PC-9 (cell line): ENCODE measurements at regions of chr6 and their contacts with region 1.

Region 1: GRCh38 chr6:27547157-27548075 is 74.5 kb upstream of the ZNF184 start:
- DNase-seq: peak; percentile 46 to 66
- H3K4me3 ChIP-seq: peak overlapping the region; percentile 64
- H3K27ac ChIP-seq: peak overlapping the region; percentile 37
- H3K4me1 ChIP-seq: no peaks in the 10 kb centered on the region; the same call in none of the 2 replicates
- H3K27me3 ChIP-seq: no peaks in the 10 kb centered on the region
- CTCF ChIP-seq: no peak

Region 2: GRCh38 chr6:27471365-27472115 is 75.9 kb before region 1 on chr6:
- CTCF ChIA-PET with region 1: no interaction called
- POLR2A ChIA-PET with region 1: no interaction called
- intact Hi-C with region 1: no loop called
- DNase-seq: no peak
- H3K4me3 ChIP-seq: peak overlapping the region; percentile 91
- H3K27ac ChIP-seq: peak overlapping the region; percentile 79; the same call in 1 of the 2 replicates
- H3K4me1 ChIP-seq: peaks cover 11% of the 10 kb centered on the region; the same call in 1 of the 2 replicates
- H3K27me3 ChIP-seq: no peaks in the 10 kb centered on the region
- CTCF ChIP-seq: no peak

Region 3: DNA sequence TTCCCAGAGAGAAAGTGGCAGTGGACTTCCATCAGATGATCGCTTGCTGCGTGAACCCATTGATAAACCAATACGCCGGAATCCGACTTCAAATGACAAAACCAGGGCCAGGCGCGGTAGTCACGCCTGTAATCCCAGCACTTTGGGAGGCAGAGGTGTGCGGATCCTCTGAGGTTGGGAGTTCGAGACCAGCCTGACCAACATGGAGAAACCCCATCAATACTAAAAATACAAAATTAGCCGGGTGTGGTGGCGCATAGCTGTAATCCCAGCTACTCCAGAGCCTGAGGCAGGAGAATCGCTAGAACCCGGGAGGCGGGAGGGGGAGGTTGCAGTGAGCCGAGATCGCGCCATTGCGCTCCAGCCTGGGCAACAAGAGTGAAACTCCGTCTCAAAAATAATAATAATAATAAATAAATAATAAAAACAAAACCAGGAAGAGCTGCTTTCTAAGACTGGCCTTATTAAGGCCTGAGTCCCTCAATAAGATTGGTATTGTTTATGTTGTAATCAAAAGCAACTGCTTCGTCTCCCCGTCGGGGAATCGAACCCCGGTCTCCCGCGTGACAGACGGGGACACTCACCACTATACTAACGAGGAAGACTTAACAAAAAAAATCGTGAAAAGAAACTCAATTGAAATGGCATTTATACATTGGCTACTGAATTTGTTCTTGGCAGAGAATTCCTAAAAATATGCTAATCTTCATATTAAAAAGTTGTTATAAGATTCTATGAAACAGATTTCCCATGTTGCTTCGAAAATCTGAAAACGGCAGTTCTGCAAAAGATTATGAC is 35.7 kb after region 1 on chr6:
- CTCF ChIA-PET with region 1: no interaction called
- POLR2A ChIA-PET with region 1: no interaction called
- intact Hi-C with region 1: loop called (anchors 2 kb)
- DNase-seq: peak; percentile 52 to 73
- H3K4me3 ChIP-seq: peak overlapping the region; percentile 54
- H3K27ac ChIP-seq: no peak overlapping the region
- H3K4me1 ChIP-seq: peaks cover 11% of the 10 kb centered on the region
- H3K27me3 ChIP-seq: no peaks in the 10 kb centered on the region
- CTCF ChIP-seq: no peak

Region 4: GRCh38 chr6:27592481-27593199 is 45.2 kb after region 1 on chr6:
- CTCF ChIA-PET with region 1: no interaction called
- POLR2A ChIA-PET with region 1: no interaction called
- intact Hi-C with region 1: loop called (anchors 2 kb)
- DNase-seq: peak; percentile 56 to 73
- H3K4me3 ChIP-seq: peak overlapping the region; percentile 64
- H3K27ac ChIP-seq: no peak overlapping the region
- H3K4me1 ChIP-seq: peaks cover 11% of the 10 kb centered on the region; the same call in 1 of the 2 replicates
- H3K27me3 ChIP-seq: no peaks in the 10 kb centered on the region
- CTCF ChIP-seq: no peak